ENCODE measurements at regions of chr4 and their contacts with region 1.

Region 1: DNA sequence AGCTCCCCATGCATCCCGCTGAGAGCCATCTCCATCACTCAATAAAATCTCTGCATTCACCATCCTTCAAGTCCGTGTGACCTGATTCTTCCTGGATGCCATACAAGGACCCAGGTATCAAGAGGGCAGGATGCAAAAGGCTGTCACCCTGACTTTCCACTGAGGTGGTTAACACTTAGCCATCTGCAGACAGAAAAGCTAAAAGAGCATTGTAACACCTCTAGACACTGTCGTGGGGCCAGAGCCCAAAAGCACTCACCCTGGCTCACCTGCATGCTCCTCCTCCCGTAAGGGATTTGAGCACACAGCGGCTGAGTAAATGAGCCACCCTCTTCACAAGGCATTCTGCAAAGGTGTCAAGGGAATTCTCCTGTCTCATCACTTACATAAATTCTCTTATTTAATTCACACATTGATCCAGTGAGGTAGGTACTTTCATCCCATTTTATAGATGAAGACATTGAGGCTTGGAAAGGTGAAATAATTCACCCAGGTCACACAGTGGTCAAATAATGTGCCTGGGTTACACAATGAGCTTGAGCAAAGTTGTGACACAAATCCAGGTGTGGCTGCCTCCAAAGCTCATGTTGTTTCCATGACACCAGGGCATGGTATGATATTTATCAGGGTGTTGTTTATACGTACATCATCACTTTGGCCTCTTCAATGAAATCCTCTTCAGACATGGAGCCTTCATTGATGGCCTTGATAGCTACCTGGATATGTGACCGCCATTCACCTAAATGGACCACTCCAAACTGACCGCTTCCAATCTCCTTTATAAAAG is 48.0 kb downstream of the TXK start:
- DNase-seq: no peak
- ATAC-seq: peak; percentile 49
- H3K4me3 Mint-ChIP-seq: no peak overlapping the region
- H3K27ac Mint-ChIP-seq: no peak overlapping the region
- H3K4me1 Mint-ChIP-seq: peaks cover 14% of the 10 kb centered on the region
- H3K27me3 Mint-ChIP-seq: no peaks in the 10 kb centered on the region

Region 2: DNA sequence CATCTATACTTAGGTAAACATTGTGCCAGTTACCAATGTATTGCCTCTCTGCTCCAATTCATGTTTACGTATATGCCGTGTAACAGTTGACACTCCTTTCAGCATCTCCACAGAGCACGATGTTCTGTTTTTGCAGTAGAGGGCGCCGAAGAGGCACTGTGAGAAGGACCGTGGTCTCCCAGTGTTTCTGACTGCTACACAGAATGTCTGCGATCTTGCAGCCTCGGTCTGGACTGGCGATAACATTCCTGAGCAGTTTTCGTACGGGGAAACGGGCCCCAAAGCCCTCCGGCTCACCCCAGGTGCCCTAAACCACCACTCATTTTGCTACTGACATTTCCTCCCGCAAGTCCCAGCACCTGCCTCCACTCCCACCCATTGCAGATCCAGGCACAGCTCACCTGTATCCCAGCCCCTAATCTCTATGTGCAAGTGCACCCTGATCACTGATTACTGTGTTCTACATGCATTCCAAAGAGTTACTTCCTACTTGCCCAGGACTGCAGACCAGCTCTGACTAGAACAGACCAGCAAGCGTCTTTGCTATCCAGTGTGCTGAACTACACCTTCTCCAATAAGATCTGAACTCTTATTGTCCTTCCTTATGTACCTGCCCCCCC is 159.3 kb before region 1 on chr4:
- CTCF ChIA-PET with region 1: interaction called, 13 read pairs
- POLR2A ChIA-PET with region 1: no interaction called
- intact Hi-C with region 1: loop called (anchors 2 to 5 kb)
- DNase-seq: peak; percentile 75
- ATAC-seq: peak; percentile 100
- H3K4me3 Mint-ChIP-seq: peak overlapping the region; percentile 43
- H3K27ac Mint-ChIP-seq: no peak overlapping the region
- H3K4me1 Mint-ChIP-seq: peaks cover 4% of the 10 kb centered on the region
- H3K27me3 Mint-ChIP-seq: peaks cover 19% of the 10 kb centered on the region

Region 3: GRCh38 chr4:47945930-47946726 is 139.9 kb before region 1 on chr4:
- CTCF ChIA-PET with region 1: no interaction called
- POLR2A ChIA-PET with region 1: no interaction called
- intact Hi-C with region 1: no loop called
- DNase-seq: no peak
- ATAC-seq: no peak
- H3K4me3 Mint-ChIP-seq: no peak overlapping the region
- H3K27ac Mint-ChIP-seq: no peak overlapping the region
- H3K4me1 Mint-ChIP-seq: no peaks in the 10 kb centered on the region
- H3K27me3 Mint-ChIP-seq: no peaks in the 10 kb centered on the region

Region 4: GRCh38 chr4:48002267-48002666 is 83.7 kb before region 1 on chr4:
- CTCF ChIA-PET with region 1: interaction called, 74 read pairs
- POLR2A ChIA-PET with region 1: no interaction called
- intact Hi-C with region 1: loop called (anchors 1 kb)
- DNase-seq: no peak
- ATAC-seq: no peak
- H3K4me3 Mint-ChIP-seq: no peak overlapping the region
- H3K27ac Mint-ChIP-seq: no peak overlapping the region
- H3K4me1 Mint-ChIP-seq: no peaks in the 10 kb centered on the region
- H3K27me3 Mint-ChIP-seq: peaks cover 5% of the 10 kb centered on the region

Region 5: DNA sequence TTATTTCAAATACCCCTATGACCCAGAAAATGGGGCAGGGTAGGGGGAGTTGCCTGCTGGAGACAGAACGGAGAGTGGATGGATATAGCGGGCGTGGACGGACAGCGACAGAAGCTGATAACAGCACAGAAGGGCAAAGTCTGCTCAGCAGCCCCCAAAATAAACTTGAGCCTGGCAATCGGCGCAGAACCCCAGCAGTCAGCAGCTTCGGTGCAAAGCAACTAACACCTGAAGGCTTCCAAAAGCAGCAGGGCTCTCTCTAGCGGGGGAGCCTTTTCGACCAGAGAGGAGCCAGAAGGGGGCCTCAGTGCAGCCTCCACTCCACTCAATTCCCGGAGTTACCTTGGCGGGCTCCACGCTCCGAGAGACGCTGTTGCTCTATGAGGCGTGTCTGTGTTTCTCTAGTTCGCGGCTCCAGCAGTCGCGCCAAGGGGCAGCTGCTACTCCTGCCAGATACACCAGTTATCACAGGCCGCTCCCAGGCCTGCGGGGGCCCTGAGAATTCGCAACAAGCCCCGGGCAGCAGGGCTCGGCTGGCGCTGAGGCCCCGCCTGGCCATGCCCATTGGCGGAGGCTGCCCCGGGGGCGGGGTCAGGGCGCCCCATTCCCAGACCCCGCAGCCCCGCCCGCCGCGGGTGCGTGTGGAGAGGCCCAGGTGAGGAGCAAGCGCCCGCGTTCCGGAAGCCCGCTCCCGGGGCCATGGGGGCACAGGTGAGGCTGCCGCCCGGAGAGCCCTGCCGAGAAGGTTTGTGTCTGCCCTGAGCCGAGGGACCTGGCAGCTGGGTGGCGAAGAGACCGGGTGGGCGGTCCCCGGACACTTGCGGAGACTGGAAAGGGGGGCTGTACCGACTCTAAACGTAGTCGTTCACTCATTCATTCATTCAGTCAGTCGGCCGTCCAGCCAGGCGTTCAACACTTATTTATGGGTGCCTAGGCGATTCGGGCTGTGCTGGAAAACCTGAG is 69.6 kb before region 1 on chr4 and contains the starts of genes CNGA1 and NIPAL1:
- CTCF ChIA-PET with region 1: interaction called, 17 read pairs
- POLR2A ChIA-PET with region 1: no interaction called
- intact Hi-C with region 1: loop called (anchors 5 kb)
- DNase-seq: peak; percentile 80
- ATAC-seq: peak; percentile 86
- H3K4me3 Mint-ChIP-seq: peak within 1 kb of the TSS; percentile 76
- H3K27ac Mint-ChIP-seq: peak within 1 kb of the TSS; percentile 66
- H3K4me1 Mint-ChIP-seq: peaks cover 29% of the 10 kb centered on the region
- H3K27me3 Mint-ChIP-seq: peaks cover 16% of the 10 kb centered on the region
- total RNA-seq, gene CNGA1: 0.16 to 0.30 TPM
- total RNA-seq, gene NIPAL1: 1.6 to 1.8 TPM

Region 6: GRCh38 chr4:48065587-48066052 is 20.4 kb before region 1 on chr4:
- CTCF ChIA-PET with region 1: interaction called, 11 read pairs
- POLR2A ChIA-PET with region 1: no interaction called
- intact Hi-C with region 1: no loop called
- DNase-seq: peak; percentile 22
- ATAC-seq: peak; percentile 94
- H3K4me3 Mint-ChIP-seq: no peak overlapping the region
- H3K27ac Mint-ChIP-seq: no peak overlapping the region
- H3K4me1 Mint-ChIP-seq: peaks cover 23% of the 10 kb centered on the region
- H3K27me3 Mint-ChIP-seq: no peaks in the 10 kb centered on the region

Region 7: GRCh38 chr4:48141048-48141447 is 55.0 kb after region 1 on chr4:
- CTCF ChIA-PET with region 1: interaction called, 23 read pairs
- POLR2A ChIA-PET with region 1: no interaction called
- intact Hi-C with region 1: loop called in 1 of 2 experiments (anchors 1 kb)
- DNase-seq: no peak
- ATAC-seq: peak; percentile 44
- H3K4me3 Mint-ChIP-seq: no peak overlapping the region
- H3K27ac Mint-ChIP-seq: no peak overlapping the region
- H3K4me1 Mint-ChIP-seq: peaks cover 47% of the 10 kb centered on the region
- H3K27me3 Mint-ChIP-seq: no peaks in the 10 kb centered on the region

Region 8: DNA sequence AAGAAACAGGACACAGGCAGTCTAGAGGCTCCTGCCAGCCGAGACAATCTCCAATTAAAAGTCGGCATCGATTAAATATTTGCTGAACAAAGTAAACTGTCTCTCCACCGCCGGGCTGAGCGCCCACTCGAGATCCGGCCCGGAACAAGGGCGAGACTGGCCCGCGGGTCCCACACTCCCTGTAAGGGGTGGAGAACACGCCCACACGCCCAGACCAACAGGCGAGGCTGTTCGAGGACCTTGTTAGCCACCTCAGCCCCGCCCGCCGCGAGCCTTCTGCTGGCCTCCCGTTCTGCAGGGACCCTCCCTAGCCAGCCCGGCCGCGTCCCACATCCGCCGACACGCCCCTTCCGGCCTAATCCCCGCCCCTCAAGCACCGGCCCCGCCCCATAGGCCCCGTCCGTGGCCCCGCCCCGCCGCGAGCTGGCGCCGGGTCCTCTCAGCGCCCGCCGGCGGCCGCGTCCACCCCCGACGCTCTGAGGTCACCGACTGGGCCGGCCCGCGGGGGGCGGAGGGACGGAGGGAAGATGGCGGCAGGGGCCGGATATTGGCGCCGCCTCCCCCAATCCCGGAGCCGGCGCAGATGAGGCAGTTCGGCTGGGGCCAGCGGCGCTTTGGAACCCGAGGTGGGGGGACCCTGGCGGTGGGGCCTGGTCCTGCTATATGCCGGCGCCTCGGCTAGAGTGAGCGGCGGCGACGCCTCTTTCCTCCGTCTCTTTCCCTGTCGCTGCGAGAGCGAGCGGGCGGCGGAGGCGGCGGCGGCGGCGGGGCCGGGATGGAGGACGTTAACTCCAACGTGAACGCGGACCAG is 255.2 kb after region 1 on chr4 and contains the start of gene SLAIN2:
- CTCF ChIA-PET with region 1: no interaction called
- POLR2A ChIA-PET with region 1: no interaction called
- intact Hi-C with region 1: no loop called
- DNase-seq: peak; percentile 99
- ATAC-seq: peak; percentile 85
- H3K4me3 Mint-ChIP-seq: peak within 1 kb of the TSS; percentile 98
- H3K27ac Mint-ChIP-seq: peak within 1 kb of the TSS; percentile 98
- H3K4me1 Mint-ChIP-seq: peaks cover 62% of the 10 kb centered on the region
- H3K27me3 Mint-ChIP-seq: no peaks in the 10 kb centered on the region
- total RNA-seq, gene SLAIN2: 55.7 to 140 TPM